ENCODE measurements at regions of chr18 and their contacts with region 1.

Region 1: GRCh38 chr18:44098551-44099098 is 582.1 kb upstream of the SETBP1 start:
- DNase-seq: peak; percentile 56
- H3K4me3 ChIP-seq: no peak overlapping the region
- H3K27ac ChIP-seq: no peak overlapping the region
- H3K4me1 ChIP-seq: no peaks in the 10 kb centered on the region
- H3K27me3 ChIP-seq: no peaks in the 10 kb centered on the region
- CTCF ChIP-seq: peak; percentile 40 to 54

Region 2: GRCh38 chr18:43620936-43621335 is 477.7 kb before region 1 on chr18:
- CTCF ChIA-PET with region 1: interaction called, 4 read pairs
- dilution Hi-C with region 1: no loop called
- in situ Hi-C with region 1: no loop called
- intact Hi-C with region 1: loop called (anchors 1 kb)
- DNase-seq: peak; percentile 20
- H3K4me3 ChIP-seq: no peak overlapping the region
- H3K27ac ChIP-seq: no peak overlapping the region
- H3K4me1 ChIP-seq: no peaks in the 10 kb centered on the region
- H3K27me3 ChIP-seq: peaks cover 3% of the 10 kb centered on the region
- CTCF ChIP-seq: peak; percentile 37 to 52

Region 3: DNA sequence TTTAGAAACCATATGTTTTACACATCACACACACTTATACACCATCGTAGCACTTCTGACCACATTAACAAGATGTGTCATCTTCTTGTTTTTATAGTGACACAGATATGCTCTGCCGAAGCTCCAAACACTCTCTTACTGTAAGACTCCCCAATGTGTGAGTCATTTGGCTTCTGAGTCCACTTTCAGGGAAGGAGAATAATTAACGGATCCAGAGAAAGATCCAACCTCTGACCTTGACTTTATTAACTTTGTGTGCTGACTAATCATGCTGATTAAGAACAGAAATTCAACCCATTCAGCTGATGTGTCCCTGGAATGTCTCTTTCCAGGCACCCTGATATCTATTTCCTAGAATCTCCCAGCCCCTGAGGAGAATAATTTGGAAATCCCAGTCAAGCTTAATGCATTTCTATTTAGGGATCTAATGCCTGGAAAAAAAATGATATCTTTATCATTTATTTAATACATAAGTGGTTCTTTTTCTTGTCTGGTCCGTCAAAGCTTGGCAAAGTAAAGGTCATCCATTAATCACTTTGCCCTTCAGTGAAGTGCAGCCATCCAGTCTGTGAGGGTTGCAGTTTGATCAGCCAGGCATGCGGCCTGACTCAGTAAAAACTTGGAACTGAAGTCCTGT is 205.5 kb before region 1 on chr18:
- CTCF ChIA-PET with region 1: no interaction called
- dilution Hi-C with region 1: no loop called
- in situ Hi-C with region 1: no loop called
- intact Hi-C with region 1: no loop called
- DNase-seq: peak; percentile 92
- H3K4me3 ChIP-seq: no peak overlapping the region
- H3K27ac ChIP-seq: no peak overlapping the region
- H3K4me1 ChIP-seq: no peaks in the 10 kb centered on the region
- H3K27me3 ChIP-seq: peaks cover 7% of the 10 kb centered on the region
- CTCF ChIP-seq: no peak

Region 4: GRCh38 chr18:44036501-44036900 is 62.1 kb before region 1 on chr18:
- CTCF ChIA-PET with region 1: no interaction called
- dilution Hi-C with region 1: no loop called
- in situ Hi-C with region 1: no loop called
- intact Hi-C with region 1: no loop called
- DNase-seq: no peak
- H3K4me3 ChIP-seq: no peak overlapping the region
- H3K27ac ChIP-seq: no peak overlapping the region
- H3K4me1 ChIP-seq: no peaks in the 10 kb centered on the region
- H3K27me3 ChIP-seq: no peaks in the 10 kb centered on the region
- CTCF ChIP-seq: no peak

Region 5: DNA sequence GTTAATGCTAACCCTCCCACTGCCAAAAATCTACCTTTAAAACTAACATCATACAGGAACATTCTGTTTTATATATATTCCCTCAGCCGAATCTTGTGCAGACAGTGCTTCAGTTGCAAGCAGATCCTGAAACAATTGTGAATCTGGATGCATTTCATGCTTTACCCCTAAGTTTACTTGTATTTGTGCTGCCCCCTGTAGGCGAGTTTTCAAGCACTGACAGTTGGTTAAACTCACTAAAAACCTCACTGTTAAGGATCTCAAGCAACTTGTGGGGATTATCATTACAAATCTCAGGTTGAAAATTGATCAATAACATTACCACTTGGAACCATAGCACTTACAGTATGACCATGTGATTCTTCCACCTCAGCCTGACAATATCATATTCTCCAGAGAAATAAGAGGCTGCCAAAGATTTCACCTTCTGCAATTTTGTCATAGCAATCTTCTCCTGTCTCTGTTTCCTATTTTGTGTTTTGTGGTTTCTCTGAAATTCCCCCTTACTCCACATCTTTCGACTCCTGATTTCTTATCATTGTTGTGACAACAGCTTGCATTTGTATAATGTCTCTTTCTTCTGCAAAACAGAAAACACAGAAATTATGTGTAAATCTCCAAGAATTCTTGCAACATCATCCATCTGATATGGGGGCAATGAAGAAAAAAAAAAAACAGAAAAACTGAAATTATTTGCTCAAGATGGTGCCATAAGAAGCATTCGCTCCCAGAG is 227.4 kb after region 1 on chr18:
- CTCF ChIA-PET with region 1: no interaction called
- dilution Hi-C with region 1: no loop called
- in situ Hi-C with region 1: no loop called
- intact Hi-C with region 1: loop called (anchors 1 kb)
- DNase-seq: peak; percentile 40
- H3K4me3 ChIP-seq: no peak overlapping the region
- H3K27ac ChIP-seq: no peak overlapping the region
- H3K4me1 ChIP-seq: no peaks in the 10 kb centered on the region
- H3K27me3 ChIP-seq: no peaks in the 10 kb centered on the region
- CTCF ChIP-seq: peak; percentile 75 to 76

Region 6: DNA sequence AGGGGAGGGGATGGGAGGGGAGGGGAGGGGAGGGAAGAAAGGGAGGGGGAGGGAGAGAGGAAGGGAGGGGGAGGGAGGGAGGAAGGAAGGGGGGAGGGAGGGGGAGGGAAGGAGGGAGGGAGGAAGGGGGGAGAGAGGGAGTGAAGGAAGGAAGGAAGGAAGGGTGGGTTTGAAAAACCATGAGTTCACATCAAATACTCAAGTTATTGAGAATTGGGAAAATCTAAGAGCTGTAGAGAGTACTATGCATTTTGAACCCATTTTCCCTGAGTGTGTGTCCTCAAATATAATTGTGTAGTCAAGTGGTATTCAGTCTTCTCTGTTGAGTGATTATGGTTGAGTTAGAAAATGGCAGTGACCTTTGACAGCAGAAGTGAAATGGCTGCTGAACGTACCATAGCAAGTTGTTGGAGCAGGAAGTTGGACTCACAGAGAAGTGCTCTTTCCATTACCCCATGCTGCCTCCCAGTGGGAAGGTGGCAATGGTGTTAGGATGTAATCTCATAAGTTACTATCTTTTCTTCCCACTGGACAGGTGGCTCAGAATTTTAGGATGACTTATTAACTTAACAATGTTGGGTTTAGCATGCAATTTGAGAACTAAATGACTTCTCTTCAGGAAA is 796.7 kb after region 1 on chr18:
- CTCF ChIA-PET with region 1: no interaction called
- dilution Hi-C with region 1: no loop called
- in situ Hi-C with region 1: no loop called
- intact Hi-C with region 1: loop called (anchors 2 kb)
- DNase-seq: peak; percentile 54
- H3K4me3 ChIP-seq: no peak overlapping the region
- H3K27ac ChIP-seq: no peak overlapping the region
- H3K4me1 ChIP-seq: peaks cover 9% of the 10 kb centered on the region
- H3K27me3 ChIP-seq: no peaks in the 10 kb centered on the region
- CTCF ChIP-seq: peak; percentile 56 to 76

Region 7: DNA sequence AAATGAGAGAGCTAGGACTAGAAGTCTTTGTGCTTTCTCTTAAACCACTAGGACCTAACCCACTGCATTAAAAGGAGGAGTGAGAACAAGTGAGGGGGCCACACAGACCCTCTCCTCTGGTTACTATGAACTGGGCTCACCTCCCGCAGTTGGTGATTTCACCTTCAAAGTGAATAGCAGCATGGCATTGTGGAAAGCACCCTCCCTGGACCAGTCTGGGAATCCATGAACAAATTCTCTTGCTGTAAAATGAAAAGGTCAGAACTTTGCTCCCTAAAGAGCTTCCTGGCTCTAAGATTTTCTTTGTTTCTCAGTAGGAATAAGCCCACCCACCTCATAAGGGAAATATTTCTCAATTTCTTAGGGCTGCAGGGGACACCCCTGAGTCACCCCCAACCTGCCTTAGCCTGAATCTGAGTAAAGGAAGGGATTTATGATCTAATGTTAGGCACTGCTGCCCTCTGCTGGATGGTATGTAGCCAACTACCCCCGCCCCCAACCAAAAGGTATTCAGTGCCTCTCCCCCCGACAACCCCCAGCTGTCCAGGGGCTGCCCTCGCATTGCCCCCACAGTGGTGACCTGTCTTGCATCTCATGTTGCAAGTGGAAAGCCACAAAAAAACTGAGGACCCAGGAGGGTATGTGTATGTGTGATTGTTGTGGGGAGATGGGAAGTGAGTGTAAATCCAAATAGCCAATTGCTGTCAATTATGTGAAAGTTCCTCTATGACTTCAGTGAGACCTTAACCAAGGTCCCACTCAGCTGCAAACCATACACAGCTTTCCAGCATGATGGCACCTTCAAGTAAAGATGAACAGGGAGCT is 1285.7 kb after region 1 on chr18:
- CTCF ChIA-PET with region 1: no interaction called
- dilution Hi-C with region 1: no loop called
- in situ Hi-C with region 1: no loop called
- intact Hi-C with region 1: loop called (anchors 2 kb)
- DNase-seq: peak; percentile 48
- H3K4me3 ChIP-seq: no peak overlapping the region
- H3K27ac ChIP-seq: no peak overlapping the region
- H3K4me1 ChIP-seq: no peaks in the 10 kb centered on the region
- H3K27me3 ChIP-seq: no peaks in the 10 kb centered on the region
- CTCF ChIP-seq: peak; percentile 53 to 80